Gastrocnemius medialis (tissue), 4 donors: ENCODE measurements at regions of chr1 and their contacts with region 1.

Region 1: GRCh38 chr1:6554031-6554906 is at the start of gene NOL9:
- DNase-seq: peak; percentile 84 to 91
- ATAC-seq: peak; percentile 94
- H3K4me3 ChIP-seq: peak within 1 kb of the TSS; percentile 75 to 100 (median 96)
- H3K27ac ChIP-seq: peak within 1 kb of the TSS; percentile 69 to 95 (median 79)
- H3K4me1 ChIP-seq: peaks cover 21 to 24% of the 10 kb centered on the region in 2 donors
- H3K27me3 ChIP-seq: no peaks in the 10 kb centered on the region
- CTCF ChIP-seq: peak; percentile 95 to 99 (median 97)
- POLR2A ChIP-seq: peak; percentile 39 to 40
- total RNA-seq, gene NOL9: 13.6 to 33.0 (median 21.9) TPM

Region 2: DNA sequence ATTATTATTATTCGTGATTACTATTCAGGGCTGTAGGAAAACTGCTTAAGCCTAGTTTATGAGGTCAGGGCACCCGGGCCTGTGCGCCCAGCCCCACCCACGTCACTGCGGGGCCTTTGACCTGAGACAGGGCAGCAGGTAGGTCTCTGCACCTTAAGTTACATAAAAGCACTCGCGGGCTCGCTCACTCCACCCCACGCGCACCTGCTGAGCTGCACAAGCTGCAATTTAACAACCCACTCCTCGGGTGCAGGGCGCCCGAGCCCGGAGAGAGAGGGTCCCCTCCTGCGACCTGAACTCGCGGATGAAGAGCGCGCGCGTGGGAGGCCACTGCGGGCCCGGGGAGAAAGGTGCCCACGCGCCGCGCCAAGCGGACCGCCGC is 319.0 kb before region 1 on chr1:
- in situ Hi-C with region 1: no loop called
- intact Hi-C with region 1: loop called (anchors 5 kb)
- DNase-seq: no peak
- ATAC-seq: peak in 1 of 2 donors; percentile 15
- H3K4me3 ChIP-seq: peak overlapping the region; percentile 58 to 64 (median 64)
- H3K27ac ChIP-seq: peak overlapping the region; percentile 67 to 81 (median 74)
- H3K4me1 ChIP-seq: peaks cover 12% of the 10 kb centered on the region in 2 donors
- H3K27me3 ChIP-seq: peaks cover under 1 to 9% (median 6%) of the 10 kb centered on the region in 3 donors
- CTCF ChIP-seq: no peak
- POLR2A ChIP-seq: no peak

Region 3: GRCh38 chr1:6624710-6625583 is 70.7 kb after region 1 on chr1 and contains the start of gene THAP3:
- in situ Hi-C with region 1: no loop called
- intact Hi-C with region 1: loop called (anchors 5 kb)
- DNase-seq: peak; percentile 75 to 83
- ATAC-seq: peak; percentile 81 to 89
- H3K4me3 ChIP-seq: peak within 1 kb of the TSS; percentile 68 to 83 (median 72)
- H3K27ac ChIP-seq: peak within 1 kb of the TSS; percentile 80 to 92 (median 90)
- H3K4me1 ChIP-seq: peaks cover 22 to 24% of the 10 kb centered on the region in 2 donors
- H3K27me3 ChIP-seq: no peaks in the 10 kb centered on the region
- CTCF ChIP-seq: peak in 1 of 5 experiments; percentile 22
- POLR2A ChIP-seq: peak; percentile 37 to 46
- total RNA-seq, gene THAP3: 16.7 to 31.0 (median 24.2) TPM

Region 4: GRCh38 chr1:6646499-6647148 is 92.4 kb after region 1 on chr1:
- in situ Hi-C with region 1: loop called in 1 of 4 experiments (anchors 10 kb)
- intact Hi-C with region 1: loop called (anchors 1 kb)
- DNase-seq: no peak
- ATAC-seq: peak; percentile 29 to 67
- H3K4me3 ChIP-seq: no peak overlapping the region
- H3K27ac ChIP-seq: no peak overlapping the region
- H3K4me1 ChIP-seq: no peaks in the 10 kb centered on the region
- H3K27me3 ChIP-seq: no peaks in the 10 kb centered on the region
- CTCF ChIP-seq: peak; percentile 43 to 61 (median 60)
- POLR2A ChIP-seq: no peak

Region 5: GRCh38 chr1:6701437-6702153 is 147.3 kb after region 1 on chr1 and contains the start of gene DNAJC11:
- in situ Hi-C with region 1: loop called in 1 of 4 experiments (anchors 10 kb)
- intact Hi-C with region 1: loop called (anchors 1 kb)
- DNase-seq: peak; percentile 77 to 87
- ATAC-seq: peak; percentile 96 to 97
- H3K4me3 ChIP-seq: peak within 1 kb of the TSS; percentile 91 to 99 (median 96)
- H3K27ac ChIP-seq: peak within 1 kb of the TSS; percentile 80 to 93 (median 88)
- H3K4me1 ChIP-seq: peaks cover 22 to 32% of the 10 kb centered on the region in 2 donors
- H3K27me3 ChIP-seq: no peaks in the 10 kb centered on the region
- CTCF ChIP-seq: peak; percentile 64 to 100 (median 99)
- POLR2A ChIP-seq: peak in 1 of 2 donors; percentile 44
- total RNA-seq, gene DNAJC11: 23.3 to 40.7 (median 30.8) TPM

Region 6: GRCh38 chr1:8154621-8155052 is 1600.4 kb after region 1 on chr1:
- in situ Hi-C with region 1: no loop called
- intact Hi-C with region 1: no loop called
- DNase-seq: no peak
- ATAC-seq: no peak
- H3K4me3 ChIP-seq: no peak overlapping the region
- H3K27ac ChIP-seq: no peak overlapping the region
- H3K4me1 ChIP-seq: no peaks in the 10 kb centered on the region
- H3K27me3 ChIP-seq: no peaks in the 10 kb centered on the region
- CTCF ChIP-seq: no peak
- POLR2A ChIP-seq: no peak